Tibial artery (tissue), 4 donors: ENCODE measurements at regions of chr15 and their contacts with region 1.

Region 1: DNA sequence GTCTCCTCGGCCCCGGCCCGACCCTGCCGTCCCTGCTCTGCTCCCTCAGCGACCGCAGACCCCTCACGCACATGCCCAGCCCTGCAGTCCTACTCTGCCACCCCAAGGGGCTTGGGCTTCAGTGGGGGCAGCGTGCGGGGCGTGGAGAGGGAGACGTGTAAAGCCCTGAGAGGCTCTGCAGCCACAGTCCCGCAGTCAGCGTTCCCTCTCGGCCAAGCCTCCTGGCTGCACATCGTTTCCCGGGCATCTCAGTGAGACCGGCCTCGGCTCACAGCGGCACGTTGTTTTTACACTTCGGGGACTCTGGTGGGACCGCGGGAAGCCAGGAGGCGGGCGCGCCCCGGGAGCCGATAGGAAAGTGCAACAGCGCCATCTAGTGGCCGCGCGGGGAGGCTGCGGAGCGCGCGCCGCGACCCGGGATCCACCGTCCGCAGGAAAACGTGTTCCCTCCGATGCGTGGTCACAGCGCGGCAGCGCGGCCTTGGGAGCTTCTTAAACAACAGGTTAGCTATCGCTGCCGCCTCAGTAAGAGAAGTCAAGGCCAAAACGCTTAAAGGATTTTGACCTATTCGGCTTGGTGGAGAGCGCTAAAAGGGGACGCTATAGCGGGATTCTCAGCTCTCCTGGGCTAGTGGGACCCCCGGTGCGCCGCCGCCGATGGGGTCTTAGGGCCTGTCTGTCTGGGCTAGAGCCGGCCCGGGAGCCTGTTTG is 226.8 kb upstream of the IGF1R start:
- DNase-seq: peak; percentile 70 to 73
- H3K4me3 ChIP-seq: peak overlapping the region; percentile 42 to 53
- H3K27ac ChIP-seq: peak overlapping the region in 1 of 2 donors; percentile 38
- H3K4me1 ChIP-seq: peaks cover 0 to 22% (median 11%) of the 10 kb centered on the region in 4 donors
- H3K27me3 ChIP-seq: peaks cover 0 to 41% of the 10 kb centered on the region in 2 donors
- CTCF ChIP-seq: peak; percentile 97 to 99

Region 2: DNA sequence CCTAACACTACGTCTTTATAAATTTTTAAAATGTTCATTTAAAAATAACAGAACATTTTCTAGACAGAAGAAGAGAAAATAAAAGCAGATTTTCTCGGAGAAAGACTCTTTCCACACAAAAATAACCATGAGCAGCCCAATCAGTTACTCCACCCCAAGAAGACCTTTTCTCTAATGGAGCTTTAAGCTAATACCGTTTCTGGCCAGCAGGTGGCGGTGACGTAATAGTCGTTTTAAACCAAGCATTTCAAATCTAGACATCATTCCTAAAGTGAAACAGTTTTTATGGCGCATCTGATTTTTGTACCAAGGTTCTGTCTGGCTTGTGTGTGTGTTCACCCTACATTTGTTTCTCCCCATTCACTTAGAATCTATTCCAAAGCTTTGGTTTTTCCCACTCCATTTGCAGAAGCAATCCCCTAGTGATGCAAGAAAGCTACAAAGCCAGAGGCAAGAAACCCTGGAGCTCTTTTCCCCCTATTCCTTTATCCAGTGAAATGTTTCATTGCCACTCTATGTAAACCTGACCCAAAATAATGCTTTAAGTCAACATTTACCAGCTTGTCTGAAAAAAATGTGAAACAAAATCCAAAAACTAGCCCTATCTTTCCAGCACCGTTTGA is 109.9 kb before region 1 on chr15:
- intact Hi-C with region 1: loop called (anchors 5 kb)
- DNase-seq: peak; percentile 81 to 85
- H3K4me3 ChIP-seq: no peak overlapping the region
- H3K27ac ChIP-seq: no peak overlapping the region
- H3K4me1 ChIP-seq: no peaks in the 10 kb centered on the region
- H3K27me3 ChIP-seq: peaks cover 0 to 4% of the 10 kb centered on the region in 2 donors
- CTCF ChIP-seq: peak; percentile 70 to 87

Region 3: DNA sequence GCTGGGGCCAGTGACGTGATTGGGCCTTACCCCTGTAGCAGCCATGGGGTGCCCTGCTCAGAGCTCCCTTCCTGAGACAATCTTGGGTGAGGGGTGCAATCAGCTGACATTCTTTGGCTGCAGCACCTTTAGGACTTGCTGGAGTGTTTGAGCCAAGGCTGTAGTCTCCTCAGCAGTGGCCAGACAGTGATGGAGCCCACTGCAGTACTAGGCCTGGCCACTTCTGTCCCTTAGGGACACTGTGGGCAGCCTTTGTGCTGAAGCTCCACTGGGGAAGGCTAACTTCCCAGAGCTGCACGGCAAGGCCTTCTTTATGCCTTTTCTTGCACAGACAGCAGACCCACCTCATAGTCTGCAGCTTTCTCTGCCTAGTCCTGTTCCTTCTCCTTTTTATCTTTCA is 58.2 kb before region 1 on chr15:
- intact Hi-C with region 1: no loop called
- DNase-seq: no peak
- H3K4me3 ChIP-seq: no peak overlapping the region
- H3K27ac ChIP-seq: no peak overlapping the region
- H3K4me1 ChIP-seq: no peaks in the 10 kb centered on the region
- H3K27me3 ChIP-seq: no peaks in the 10 kb centered on the region
- CTCF ChIP-seq: no peak